MCF 10A (cell line): ENCODE measurements at regions of chr5 and their contacts with region 1.

Region 1: DNA sequence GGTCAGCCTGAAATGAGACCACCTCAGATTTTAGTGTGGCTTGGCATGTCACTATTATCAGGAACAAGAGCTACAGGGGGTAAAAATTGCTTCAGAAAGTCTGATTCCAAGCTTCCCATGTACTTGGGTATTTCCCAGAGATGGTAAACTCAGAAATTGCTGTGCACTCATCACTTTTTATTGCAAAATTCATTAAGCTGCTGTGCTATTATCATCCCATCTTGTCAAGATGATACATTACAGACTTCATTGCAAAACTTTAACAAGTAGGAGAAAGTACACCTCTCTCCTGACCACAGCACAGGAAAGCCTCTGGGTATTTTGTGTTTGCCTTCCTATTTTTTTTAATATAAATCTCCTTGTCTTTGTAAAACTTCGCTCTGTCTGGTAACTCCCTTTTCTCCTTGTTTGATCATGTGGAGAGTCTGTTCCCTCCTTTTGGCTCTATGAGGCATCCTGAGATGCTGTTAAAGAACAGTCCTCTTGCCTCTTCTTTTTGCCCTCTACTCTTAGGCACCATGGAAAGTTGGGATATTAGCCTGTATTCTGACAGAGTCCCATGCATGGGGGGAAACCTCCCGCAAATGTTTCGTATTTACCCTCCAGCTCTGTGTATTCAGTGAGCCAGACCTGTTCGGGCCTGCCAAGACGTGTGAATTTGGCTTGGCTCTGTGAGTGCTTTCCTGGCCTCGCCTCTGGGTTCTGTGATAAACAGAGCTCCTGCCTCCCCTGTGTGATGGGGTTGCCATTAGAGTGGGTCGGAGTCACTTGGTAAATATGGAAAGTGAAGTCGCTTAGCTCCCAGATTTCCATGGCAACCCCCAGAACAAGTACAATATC is 260.7 kb downstream of the NR3C1 start:
- DNase-seq: peak; percentile 97
- H3K4me3 Mint-ChIP-seq: peak overlapping the region; percentile 33
- H3K27ac Mint-ChIP-seq: peak overlapping the region; percentile 91
- H3K4me1 Mint-ChIP-seq: peaks cover 54% of the 10 kb centered on the region
- H3K27me3 Mint-ChIP-seq: no peaks in the 10 kb centered on the region
- CTCF ChIP-seq: no peak

Region 2: GRCh38 chr5:143061161-143061945 is 81.5 kb before region 1 on chr5:
- CTCF ChIA-PET with region 1: interaction called, 6 read pairs
- POLR2A ChIA-PET with region 1: interaction called, 27 read pairs
- intact Hi-C with region 1: no loop called
- DNase-seq: peak; percentile 69
- H3K4me3 Mint-ChIP-seq: peak overlapping the region; percentile 6
- H3K27ac Mint-ChIP-seq: peak overlapping the region; percentile 81
- H3K4me1 Mint-ChIP-seq: peaks cover 49% of the 10 kb centered on the region
- H3K27me3 Mint-ChIP-seq: no peaks in the 10 kb centered on the region
- CTCF ChIP-seq: no peak

Region 3: GRCh38 chr5:143153332-143154119 is 10.7 kb after region 1 on chr5:
- CTCF ChIA-PET with region 1: interaction called, 4 read pairs
- POLR2A ChIA-PET with region 1: interaction called, 20 read pairs
- intact Hi-C with region 1: no loop called
- DNase-seq: no peak
- H3K4me3 Mint-ChIP-seq: no peak overlapping the region
- H3K27ac Mint-ChIP-seq: peak overlapping the region; percentile 96
- H3K4me1 Mint-ChIP-seq: peaks cover 43% of the 10 kb centered on the region
- H3K27me3 Mint-ChIP-seq: no peaks in the 10 kb centered on the region
- CTCF ChIP-seq: no peak

Region 4: GRCh38 chr5:143186623-143187022 is 43.8 kb after region 1 on chr5:
- CTCF ChIA-PET with region 1: interaction called, 3 read pairs
- POLR2A ChIA-PET with region 1: interaction called, 10 read pairs
- intact Hi-C with region 1: no loop called
- DNase-seq: no peak
- H3K4me3 Mint-ChIP-seq: no peak overlapping the region
- H3K27ac Mint-ChIP-seq: no peak overlapping the region
- H3K4me1 Mint-ChIP-seq: peaks cover 16% of the 10 kb centered on the region
- H3K27me3 Mint-ChIP-seq: no peaks in the 10 kb centered on the region
- CTCF ChIP-seq: no peak

Region 5: DNA sequence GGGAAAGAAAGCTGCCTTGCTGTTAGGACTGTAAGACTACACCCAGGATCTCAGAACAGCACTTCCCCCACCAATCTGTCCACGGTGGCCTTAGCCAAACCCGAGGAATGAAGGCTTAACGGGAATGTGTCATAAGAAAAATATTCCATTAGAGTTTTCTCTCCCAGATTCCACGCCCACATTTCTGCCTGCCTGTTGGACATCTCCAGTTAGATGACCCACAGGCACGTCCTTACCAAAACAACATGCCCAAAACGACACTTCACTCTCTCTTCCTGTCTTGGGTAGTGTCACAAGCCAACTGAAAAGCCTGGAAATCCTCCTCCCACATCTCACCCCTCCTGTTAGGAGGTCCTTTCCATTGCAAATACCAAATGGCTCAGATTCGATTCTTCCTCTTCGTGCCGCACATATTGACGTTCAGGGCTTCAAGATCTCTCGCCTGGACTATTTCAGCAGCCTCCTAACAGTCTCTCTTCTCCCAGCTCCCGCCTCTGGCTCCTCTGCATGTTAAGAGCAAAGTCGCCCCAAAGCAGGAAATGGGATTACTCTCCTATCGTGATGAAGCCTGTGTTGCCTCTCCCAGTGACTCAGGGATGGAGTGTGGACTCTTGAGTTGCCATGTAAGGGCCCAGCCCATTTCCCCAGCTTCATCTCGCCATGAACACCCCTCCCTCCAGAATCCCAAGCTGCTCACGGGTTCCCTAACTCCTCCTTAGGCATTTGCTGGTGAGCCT is 101.4 kb after region 1 on chr5:
- CTCF ChIA-PET with region 1: no interaction called
- POLR2A ChIA-PET with region 1: interaction called, 37 read pairs
- intact Hi-C with region 1: no loop called
- DNase-seq: peak; percentile 98
- H3K4me3 Mint-ChIP-seq: peak overlapping the region; percentile 54
- H3K27ac Mint-ChIP-seq: peak overlapping the region; percentile 84
- H3K4me1 Mint-ChIP-seq: peaks cover 61% of the 10 kb centered on the region
- H3K27me3 Mint-ChIP-seq: no peaks in the 10 kb centered on the region
- CTCF ChIP-seq: no peak